Endothelial cell of umbilical vein (primary cell): ENCODE measurements at regions of chr18 and their contacts with region 1.

Region 1: DNA sequence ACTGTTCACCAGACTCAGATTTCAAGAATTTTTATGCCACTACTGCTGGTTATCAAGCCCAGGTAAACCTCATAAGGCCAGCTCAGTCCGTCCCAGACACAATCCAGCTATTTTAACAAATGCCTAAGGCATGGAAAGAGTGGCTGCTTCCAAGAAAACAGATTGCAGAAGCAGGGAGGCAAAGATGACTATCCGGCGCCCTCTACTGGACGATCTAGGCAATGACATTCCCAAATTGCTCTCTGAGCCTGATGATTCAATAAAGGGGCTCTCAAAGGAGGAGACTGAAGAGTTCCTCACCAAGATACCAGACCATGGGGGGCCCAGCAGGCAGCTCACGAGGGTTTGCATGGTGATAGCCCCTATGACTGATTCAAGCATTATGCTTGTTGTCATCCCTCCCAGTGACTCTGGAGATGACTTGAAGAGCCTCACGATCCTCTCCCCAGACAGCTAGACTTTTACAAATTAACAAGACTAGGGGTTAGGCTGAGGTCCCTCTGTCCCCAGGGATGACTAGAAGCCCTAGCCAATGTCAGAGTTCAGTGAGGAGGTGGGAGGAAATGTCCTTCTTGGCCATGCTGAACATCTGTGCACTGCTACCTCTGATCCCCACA is 25.0 kb downstream of the SERPINB8 start:
- DNase-seq: peak; percentile 51
- H3K4me3 ChIP-seq: no peak overlapping the region
- H3K27ac ChIP-seq: no peak overlapping the region
- H3K4me1 ChIP-seq: no peaks in the 10 kb centered on the region
- H3K27me3 ChIP-seq: no peaks in the 10 kb centered on the region
- CTCF ChIP-seq: peak; percentile 83 to 90
- POLR2A ChIP-seq: no peak

Region 2: GRCh38 chr18:63949068-63949737 is 45.7 kb before region 1 on chr18 and contains the start of gene HMSD:
- CTCF ChIA-PET with region 1: no interaction called
- POLR2A ChIA-PET with region 1: no interaction called
- dilution Hi-C with region 1: no loop called
- intact Hi-C with region 1: loop called (anchors 1 kb)
- DNase-seq: peak; percentile 17
- H3K4me3 ChIP-seq: peak within 1 kb of the TSS in 2 of 3 experiments; percentile 2 to 23
- H3K27ac ChIP-seq: no peak within 1 kb of the TSS
- H3K4me1 ChIP-seq: peaks cover 5% of the 10 kb centered on the region
- H3K27me3 ChIP-seq: peaks cover 0 to 7% of the 10 kb centered on the region in 2 experiments
- CTCF ChIP-seq: peak; percentile 37 to 59
- POLR2A ChIP-seq: no peak
- total RNA-seq, gene HMSD: not detected in 2 replicates

Region 3: GRCh38 chr18:63969960-63970802 is 24.7 kb before region 1 on chr18 and contains the start of gene SERPINB8:
- CTCF ChIA-PET with region 1: interaction called, 6 read pairs
- POLR2A ChIA-PET with region 1: no interaction called
- dilution Hi-C with region 1: no loop called
- intact Hi-C with region 1: loop called (anchors 2 kb)
- DNase-seq: peak; percentile 86
- H3K4me3 ChIP-seq: peak within 1 kb of the TSS; percentile 60 to 94 (median 63)
- H3K27ac ChIP-seq: peak within 1 kb of the TSS; percentile 99
- H3K4me1 ChIP-seq: peaks cover 14% of the 10 kb centered on the region
- H3K27me3 ChIP-seq: no peaks in the 10 kb centered on the region
- CTCF ChIP-seq: no peak
- POLR2A ChIP-seq: peak; percentile 82
- total RNA-seq, gene SERPINB8: 24.1 and 25.7 TPM in 2 replicates

Region 4: GRCh38 chr18:64009305-64009704 is 14.4 kb after region 1 on chr18:
- CTCF ChIA-PET with region 1: interaction called, 24 read pairs
- POLR2A ChIA-PET with region 1: no interaction called
- dilution Hi-C with region 1: no loop called
- intact Hi-C with region 1: no loop called
- DNase-seq: no peak
- H3K4me3 ChIP-seq: no peak overlapping the region
- H3K27ac ChIP-seq: no peak overlapping the region
- H3K4me1 ChIP-seq: no peaks in the 10 kb centered on the region
- H3K27me3 ChIP-seq: peaks cover 0 to 2% of the 10 kb centered on the region in 2 experiments
- CTCF ChIP-seq: no peak
- POLR2A ChIP-seq: no peak